Panc1 (cell line): ENCODE measurements at regions of chr2 and their contacts with region 1.

Region 1: GRCh38 chr2:168961450-168962229 is 60.5 kb downstream of the G6PC2 start:
- DNase-seq: peak; percentile 74
- ATAC-seq: peak; percentile 83
- H3K4me3 ChIP-seq: no peak overlapping the region
- H3K27ac ChIP-seq: no peak overlapping the region
- H3K4me1 ChIP-seq: no peaks in the 10 kb centered on the region
- H3K27me3 ChIP-seq: peaks cover 2% of the 10 kb centered on the region
- CTCF ChIP-seq: peak; percentile 82

Region 2: GRCh38 chr2:169131587-169132512 is 170.2 kb after region 1 on chr2:
- CTCF ChIA-PET with region 1: no interaction called
- POLR2A ChIA-PET with region 1: no interaction called
- in situ Hi-C with region 1: no loop called
- intact Hi-C with region 1: loop called (anchors 5 kb)
- DNase-seq: peak; percentile 48
- ATAC-seq: peak; percentile 72
- H3K4me3 ChIP-seq: no peak overlapping the region
- H3K27ac ChIP-seq: no peak overlapping the region
- H3K4me1 ChIP-seq: no peaks in the 10 kb centered on the region
- H3K27me3 ChIP-seq: peaks cover 2% of the 10 kb centered on the region; the same call in 1 of the 2 replicates
- CTCF ChIP-seq: peak; percentile 78

Region 3: DNA sequence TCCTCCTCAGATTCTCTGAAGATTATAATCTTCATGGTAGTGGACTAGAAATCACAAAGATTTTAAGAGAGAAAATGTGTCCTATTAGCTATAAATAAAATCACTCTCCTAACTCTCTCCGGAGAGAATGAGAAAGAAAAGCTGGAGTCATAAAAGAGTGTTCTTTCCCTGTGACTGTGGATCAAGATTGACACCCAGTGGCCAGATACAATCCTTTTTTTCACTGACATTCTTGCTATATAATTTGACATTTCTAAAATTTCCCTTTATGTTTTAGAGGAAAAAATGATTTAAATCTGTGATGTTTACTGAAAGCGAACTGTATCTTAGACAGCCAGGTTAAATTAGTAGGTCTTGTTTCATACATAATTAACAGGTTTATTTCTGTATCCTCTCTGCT is 436.1 kb after region 1 on chr2:
- CTCF ChIA-PET with region 1: no interaction called
- POLR2A ChIA-PET with region 1: no interaction called
- in situ Hi-C with region 1: no loop called
- intact Hi-C with region 1: loop called (anchors 10 kb)
- DNase-seq: no peak
- ATAC-seq: peak; percentile 69; the same call in 1 of the 2 replicates
- H3K4me3 ChIP-seq: no peak overlapping the region
- H3K27ac ChIP-seq: no peak overlapping the region
- H3K4me1 ChIP-seq: no peaks in the 10 kb centered on the region
- H3K27me3 ChIP-seq: peaks cover 15% of the 10 kb centered on the region; the same call in 1 of the 2 replicates
- CTCF ChIP-seq: peak; percentile 59; the same call in 1 of the 2 replicates